Motor neuron (in vitro differentiated cells): ENCODE measurements at regions of chr2 and their contacts with region 1.

Region 1: DNA sequence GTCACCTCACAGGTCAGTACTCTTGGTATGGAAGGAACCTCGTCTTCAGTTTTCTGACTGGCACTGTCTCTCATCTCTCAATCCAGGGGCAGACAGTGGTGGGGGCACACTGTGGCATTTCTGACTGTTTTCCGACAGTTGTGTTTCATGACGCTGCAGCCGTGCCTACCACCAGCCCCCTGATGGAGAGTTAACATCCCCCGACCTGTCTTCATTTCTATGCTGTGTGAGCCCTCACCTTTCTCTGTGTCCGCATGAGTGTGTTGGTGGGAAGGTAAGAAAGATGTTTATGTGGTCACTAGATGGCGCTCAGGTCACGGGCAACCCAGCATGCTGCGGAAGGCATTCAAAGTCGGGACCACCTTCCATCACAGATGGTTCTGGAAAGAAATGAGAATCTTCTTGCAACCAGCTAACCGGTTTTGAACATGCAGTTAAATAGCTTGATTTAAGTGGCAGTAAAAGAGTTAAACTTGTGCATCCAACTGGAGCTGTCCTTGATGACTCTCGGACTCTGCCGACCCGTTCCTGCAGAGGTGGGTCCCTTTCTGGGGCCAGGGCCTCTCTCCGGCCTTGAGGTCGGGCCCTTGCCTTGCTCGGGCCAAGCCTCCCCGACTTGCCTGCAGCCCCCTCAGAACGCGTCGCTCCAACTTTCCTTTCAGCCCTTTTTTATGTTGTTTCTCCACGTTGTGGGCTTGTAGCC is 92.4 kb downstream of the DYSF start:
- ATAC-seq: peak; percentile 11 to 93 (median 77)
- H3K4me3 ChIP-seq: no peak overlapping the region
- H3K27ac ChIP-seq: no peak overlapping the region
- H3K4me1 ChIP-seq: no peaks in the 10 kb centered on the region

Region 2: GRCh38 chr2:72137498-72138010 is 591.8 kb after region 1 on chr2:
- in situ Hi-C with region 1: loop called in 3 of 9 experiments (anchors 25 kb)
- ATAC-seq: peak; percentile 20 to 87 (median 76)
- H3K4me3 ChIP-seq: no peak overlapping the region
- H3K27ac ChIP-seq: no peak overlapping the region
- H3K4me1 ChIP-seq: peaks cover 7 to 18% of the 10 kb centered on the region in 2 donors

Region 3: DNA sequence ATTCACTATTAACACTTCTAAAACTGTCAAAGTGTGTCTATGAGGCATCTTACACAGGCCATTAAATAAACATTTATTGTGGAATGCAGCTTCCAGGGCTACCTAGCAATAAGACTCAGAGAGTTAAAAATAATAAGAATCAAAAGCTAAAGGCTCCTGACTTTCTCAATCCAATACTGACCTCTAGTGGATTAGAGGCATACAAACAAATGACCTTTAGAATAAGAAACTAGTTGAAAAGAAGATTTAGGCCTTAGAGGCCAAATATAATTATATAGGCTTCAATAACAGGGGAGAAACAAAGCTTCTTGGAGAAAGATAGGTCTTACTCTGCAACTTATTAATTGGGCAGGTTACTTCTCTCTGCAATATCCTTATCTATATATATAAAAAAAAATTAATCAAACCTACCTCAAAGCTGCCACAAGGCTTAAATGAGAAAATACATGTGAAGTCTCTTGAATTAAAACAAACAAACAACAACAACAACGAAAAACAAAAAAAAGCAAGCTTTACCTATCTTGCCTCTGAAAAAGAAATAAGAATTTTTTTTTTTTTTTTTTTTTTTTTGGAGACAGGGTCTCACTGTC is 1034.0 kb after region 1 on chr2:
- in situ Hi-C with region 1: loop called in 2 of 9 experiments (anchors 25 kb)
- ATAC-seq: peak in 4 of 8 experiments; percentile 35 to 66 (median 54)
- H3K4me3 ChIP-seq: no peak overlapping the region
- H3K27ac ChIP-seq: no peak overlapping the region
- H3K4me1 ChIP-seq: no peaks in the 10 kb centered on the region

Region 4: GRCh38 chr2:72770879-72771461 is 1225.2 kb after region 1 on chr2:
- in situ Hi-C with region 1: loop called in 1 of 9 experiments (anchors 25 kb)
- ATAC-seq: peak in 4 of 8 experiments; percentile 33 to 67 (median 64)
- H3K4me3 ChIP-seq: no peak overlapping the region
- H3K27ac ChIP-seq: no peak overlapping the region
- H3K4me1 ChIP-seq: no peaks in the 10 kb centered on the region

Region 5: GRCh38 chr2:72887754-72888437 is 1342.2 kb after region 1 on chr2:
- in situ Hi-C with region 1: loop called in 1 of 9 experiments (anchors 25 kb)
- ATAC-seq: peak; percentile 51 to 77 (median 72)
- H3K4me3 ChIP-seq: peak overlapping the region; percentile 32 to 45 (median 39)
- H3K27ac ChIP-seq: no peak overlapping the region
- H3K4me1 ChIP-seq: peaks cover 0 to 4% of the 10 kb centered on the region in 2 donors